ENCODE measurements at regions of chr1 and their contacts with region 1.

Region 1: DNA sequence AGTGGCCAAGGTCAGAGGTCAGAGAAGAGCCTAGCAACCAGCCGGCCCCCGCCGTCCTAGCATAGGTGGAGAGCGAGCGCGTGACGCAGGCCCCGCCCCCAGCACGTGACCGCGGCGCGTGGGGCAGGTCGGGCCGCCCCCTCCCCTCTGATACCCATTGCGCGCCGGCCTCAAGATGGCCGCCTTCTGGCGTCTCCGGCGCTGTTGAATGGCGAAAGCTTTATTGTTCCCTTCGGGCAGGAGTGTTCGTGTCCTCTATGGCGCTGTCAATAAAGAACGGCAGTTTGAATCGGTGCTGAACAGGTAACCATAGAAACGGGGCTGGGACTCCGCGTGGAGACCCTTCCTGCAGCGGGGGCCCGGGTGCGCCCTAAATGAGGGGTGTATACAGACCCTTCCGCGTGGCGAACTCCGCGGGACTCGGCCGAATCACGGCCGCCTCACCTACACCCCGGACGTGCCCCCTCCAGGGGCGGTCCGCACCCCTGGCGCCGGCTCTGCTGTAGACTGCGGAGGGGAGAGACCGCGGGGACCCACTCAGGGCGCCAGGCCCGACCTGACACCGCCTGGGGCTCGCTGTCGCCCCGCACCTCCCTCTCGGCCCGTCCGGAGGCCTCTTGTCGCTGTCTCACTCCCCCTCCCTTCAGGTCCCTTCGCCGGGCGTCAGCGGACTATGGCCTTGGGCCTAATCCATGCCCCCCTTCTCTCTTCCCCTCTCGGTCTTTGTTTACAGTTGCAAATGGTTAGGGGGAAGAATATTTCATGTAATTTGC is at the start of gene ZBTB40:
- DNase-seq: peak; percentile 98
- ATAC-seq: peak; percentile 97
- H3K4me3 Mint-ChIP-seq: peak within 1 kb of the TSS; percentile 94
- H3K27ac Mint-ChIP-seq: peak within 1 kb of the TSS; percentile 90
- H3K4me1 Mint-ChIP-seq: peaks cover 41% of the 10 kb centered on the region
- H3K27me3 Mint-ChIP-seq: no peaks in the 10 kb centered on the region
- total RNA-seq, gene ZBTB40: 12.7 to 13.5 TPM

Region 2: GRCh38 chr1:22431965-22432364 is 19.9 kb before region 1 on chr1:
- CTCF ChIA-PET with region 1: no interaction called
- POLR2A ChIA-PET with region 1: no interaction called
- intact Hi-C with region 1: loop called (anchors 1 to 2 kb)
- DNase-seq: no peak
- ATAC-seq: no peak
- H3K4me3 Mint-ChIP-seq: no peak overlapping the region
- H3K27ac Mint-ChIP-seq: no peak overlapping the region
- H3K4me1 Mint-ChIP-seq: peaks cover 2% of the 10 kb centered on the region
- H3K27me3 Mint-ChIP-seq: peaks cover 10% of the 10 kb centered on the region

Region 3: DNA sequence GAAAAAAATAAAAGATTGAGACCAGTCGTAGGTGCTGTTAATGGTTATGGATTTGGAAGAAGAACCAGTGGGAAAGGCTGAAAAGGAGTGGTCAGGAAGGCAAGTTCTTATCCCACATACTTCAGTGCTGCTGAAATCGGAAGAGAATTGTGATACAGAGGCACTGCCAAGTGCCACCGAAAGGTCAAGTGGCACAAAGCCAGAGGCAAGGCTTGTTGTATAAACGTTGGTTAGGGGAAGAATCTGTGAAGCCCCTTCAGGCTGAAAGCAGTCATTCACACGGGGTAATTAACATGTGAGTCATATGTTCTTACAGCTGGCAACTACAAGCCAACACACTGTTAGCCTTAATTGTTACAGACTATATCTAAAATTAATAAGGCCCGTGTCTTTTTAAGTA is 48.6 kb after region 1 on chr1:
- CTCF ChIA-PET with region 1: no interaction called
- POLR2A ChIA-PET with region 1: no interaction called
- intact Hi-C with region 1: loop called in 1 of 2 experiments (anchors 5 kb)
- DNase-seq: no peak
- ATAC-seq: no peak
- H3K4me3 Mint-ChIP-seq: no peak overlapping the region
- H3K27ac Mint-ChIP-seq: no peak overlapping the region
- H3K4me1 Mint-ChIP-seq: peaks cover 3% of the 10 kb centered on the region
- H3K27me3 Mint-ChIP-seq: no peaks in the 10 kb centered on the region

Region 4: DNA sequence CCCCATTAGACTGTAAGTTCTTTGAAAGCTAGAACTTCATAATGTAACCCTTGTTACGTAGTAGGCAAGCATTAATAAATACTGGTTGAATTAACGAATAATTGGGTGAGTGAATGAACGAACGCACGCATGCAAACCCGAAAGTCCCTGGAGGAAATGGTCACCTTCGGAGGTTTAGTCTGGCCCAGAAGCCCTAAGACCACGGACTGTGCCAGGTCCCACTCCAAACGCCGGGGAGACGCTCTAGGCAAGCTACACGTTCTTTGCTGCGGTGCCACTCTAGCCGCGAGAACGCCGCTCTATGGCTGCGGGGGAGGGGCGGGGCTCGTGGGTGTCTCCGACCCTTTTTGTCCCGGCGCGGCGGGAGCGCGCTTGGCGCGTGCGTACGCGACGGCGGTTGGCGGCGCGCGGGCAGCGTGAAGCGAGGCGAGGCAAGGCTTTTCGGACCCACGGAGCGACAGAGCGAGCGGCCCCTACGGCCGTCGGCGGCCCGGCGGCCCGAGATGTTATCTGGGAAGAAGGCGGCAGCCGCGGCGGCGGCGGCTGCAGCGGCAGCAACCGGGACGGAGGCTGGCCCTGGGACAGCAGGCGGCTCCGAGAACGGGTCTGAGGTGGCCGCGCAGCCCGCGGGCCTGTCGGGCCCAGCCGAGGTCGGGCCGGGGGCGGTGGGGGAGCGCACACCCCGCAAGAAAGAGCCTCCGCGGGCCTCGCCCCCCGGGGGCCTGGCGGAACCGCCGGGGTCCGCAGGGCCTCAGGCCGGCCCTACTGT is 567.4 kb after region 1 on chr1 and contains the start of gene KDM1A:
- CTCF ChIA-PET with region 1: no interaction called
- POLR2A ChIA-PET with region 1: no interaction called
- intact Hi-C with region 1: loop called in 1 of 2 experiments (anchors 5 kb)
- DNase-seq: peak; percentile 96
- ATAC-seq: peak; percentile 97
- H3K4me3 Mint-ChIP-seq: peak within 1 kb of the TSS; percentile 98
- H3K27ac Mint-ChIP-seq: peak within 1 kb of the TSS; percentile 90
- H3K4me1 Mint-ChIP-seq: peaks cover 43% of the 10 kb centered on the region
- H3K27me3 Mint-ChIP-seq: no peaks in the 10 kb centered on the region
- total RNA-seq, gene KDM1A: 66.5 to 73.2 TPM

Measured in activated CD4-positive, alpha-beta T cell treated with anti-CD3 and anti-CD28 coated beads for 36 hours (primary cell).